Keratinocyte (primary cell): ENCODE measurements at regions of chr11 and their contacts with region 1.

Region 1: DNA sequence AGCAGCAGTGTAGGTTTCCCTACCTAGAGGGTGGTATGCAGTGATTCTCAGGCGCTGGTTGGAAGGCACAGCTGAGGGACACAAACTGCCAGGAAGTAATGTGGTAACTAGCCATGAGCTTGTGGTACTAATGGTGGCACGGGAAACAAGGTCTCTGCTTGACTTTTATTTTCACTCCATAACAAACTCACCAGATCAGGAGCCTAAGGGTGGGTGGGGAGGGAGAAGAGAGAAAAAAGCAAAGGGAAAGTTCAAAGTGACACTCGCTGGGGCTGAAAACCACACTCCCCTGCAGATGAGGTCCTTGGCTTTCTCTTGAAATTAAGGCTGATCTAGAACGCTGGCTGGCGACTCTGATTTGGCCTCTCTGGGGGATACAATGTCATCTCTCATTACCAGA is 22.0 kb downstream of the TRAF6 start:
- DNase-seq: no peak
- H3K4me3 ChIP-seq: no peak overlapping the region
- H3K27ac ChIP-seq: no peak overlapping the region
- H3K4me1 ChIP-seq: no peaks in the 10 kb centered on the region
- H3K27me3 ChIP-seq: no peaks in the 10 kb centered on the region
- CTCF ChIP-seq: no peak

Region 2: GRCh38 chr11:36296895-36297604 is 191.0 kb before region 1 on chr11:
- dilution Hi-C with region 1: loop called (anchors 5 kb)
- DNase-seq: no peak
- H3K4me3 ChIP-seq: no peak overlapping the region
- H3K27ac ChIP-seq: no peak overlapping the region
- H3K4me1 ChIP-seq: no peaks in the 10 kb centered on the region
- H3K27me3 ChIP-seq: no peaks in the 10 kb centered on the region
- CTCF ChIP-seq: no peak